ENCODE measurements at regions of chr9 and their contacts with region 1.

Region 1: DNA sequence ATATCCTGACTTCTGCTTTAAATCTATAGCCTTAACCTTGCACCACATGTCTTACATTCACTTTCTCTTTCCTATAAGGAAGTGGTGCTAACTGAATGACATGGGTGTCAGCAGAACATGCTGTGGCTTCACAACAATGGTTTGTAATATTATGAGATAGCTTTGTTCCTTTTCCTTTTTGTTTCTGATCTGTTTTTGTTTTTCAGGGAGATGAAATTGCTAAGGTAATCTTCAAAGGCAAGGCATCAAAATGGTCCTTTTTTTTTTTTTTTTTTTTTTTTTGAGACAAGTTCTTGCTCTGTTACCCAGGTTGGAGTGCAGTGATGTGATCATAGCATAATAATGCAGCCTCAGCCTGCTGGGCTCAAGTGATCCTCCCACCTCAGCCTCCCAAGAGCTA is 53.6 kb upstream of the RANBP6 start:
- DNase-seq: no peak
- H3K4me3 Mint-ChIP-seq: no peak overlapping the region
- H3K27ac Mint-ChIP-seq: peak overlapping the region; percentile 66
- H3K4me1 Mint-ChIP-seq: peaks cover 18% of the 10 kb centered on the region
- H3K27me3 Mint-ChIP-seq: no peaks in the 10 kb centered on the region

Region 2: GRCh38 chr9:5958273-5958672 is 110.7 kb before region 1 on chr9:
- CTCF ChIA-PET with region 1: no interaction called
- POLR2A ChIA-PET with region 1: no interaction called
- intact Hi-C with region 1: no loop called
- DNase-seq: no peak
- H3K4me3 Mint-ChIP-seq: no peak overlapping the region
- H3K27ac Mint-ChIP-seq: no peak overlapping the region
- H3K4me1 Mint-ChIP-seq: peaks cover 9% of the 10 kb centered on the region
- H3K27me3 Mint-ChIP-seq: no peaks in the 10 kb centered on the region

Region 3: GRCh38 chr9:6106576-6107339 is 37.8 kb after region 1 on chr9:
- CTCF ChIA-PET with region 1: no interaction called
- POLR2A ChIA-PET with region 1: no interaction called
- intact Hi-C with region 1: loop called (anchors 5 kb)
- DNase-seq: no peak
- H3K4me3 Mint-ChIP-seq: no peak overlapping the region
- H3K27ac Mint-ChIP-seq: no peak overlapping the region
- H3K4me1 Mint-ChIP-seq: peaks cover 17% of the 10 kb centered on the region
- H3K27me3 Mint-ChIP-seq: no peaks in the 10 kb centered on the region

Measured in activated CD4-positive, alpha-beta memory T cell treated with anti-CD3 and anti-CD28 coated beads for 36 hours (primary cell).